Naive thymus-derived CD8-positive, alpha-beta T cell (primary cell): ENCODE measurements at regions of chr22 and their contacts with region 1.

Region 1: DNA sequence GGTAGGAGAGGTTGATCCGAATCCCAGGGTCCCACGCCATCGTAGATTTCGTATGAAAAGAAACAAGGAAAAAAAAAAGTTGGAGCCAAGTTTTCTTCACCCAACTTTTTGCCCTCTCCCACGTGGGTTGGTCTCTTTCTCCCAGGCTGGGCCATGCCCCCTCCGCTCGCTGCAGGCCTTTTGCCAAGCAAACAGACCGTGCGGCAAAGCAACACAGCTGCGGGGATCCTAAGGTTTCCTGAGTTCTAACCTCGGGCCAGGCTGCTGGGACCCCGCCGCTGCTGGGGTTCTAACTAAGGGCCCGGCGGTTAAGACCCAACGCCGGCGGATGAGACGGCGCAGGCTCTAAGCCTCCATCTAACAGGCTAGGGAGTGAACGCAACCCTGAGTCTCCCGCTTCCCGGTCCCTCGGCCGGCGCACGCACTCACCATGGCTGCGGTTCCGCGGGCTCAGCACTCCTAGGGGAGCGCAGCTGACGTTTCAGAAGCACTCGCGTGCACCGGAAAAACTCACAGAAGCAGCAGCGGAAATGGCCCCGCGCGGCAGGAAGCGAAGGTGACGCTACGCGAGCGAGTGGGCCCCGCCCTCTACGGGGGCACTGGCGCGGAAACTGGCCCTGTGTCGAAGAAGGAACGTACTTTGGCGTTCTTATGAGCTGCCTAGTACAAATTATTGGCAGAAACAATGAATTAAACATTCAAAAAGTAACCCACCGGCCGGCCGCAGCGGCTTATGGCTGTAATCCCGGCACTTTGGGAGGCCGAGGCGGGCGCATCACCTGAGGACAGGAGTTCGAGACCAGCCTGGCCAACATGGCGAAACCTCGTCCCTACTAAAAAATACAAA is at the start of gene SNU13:
- DNase-seq: peak; percentile 85 to 95 (median 91)
- ATAC-seq: peak; percentile 96
- H3K4me3 Mint-ChIP-seq: peak within 1 kb of the TSS; percentile 92 to 99 (median 96)
- H3K27ac Mint-ChIP-seq: peak within 1 kb of the TSS; percentile 97 to 99 (median 99)
- H3K4me1 Mint-ChIP-seq: peaks cover 14 to 35% (median 30%) of the 10 kb centered on the region in 4 donors
- H3K27me3 Mint-ChIP-seq: no peaks in the 10 kb centered on the region
- polyA plus RNA-seq, gene SNU13: 226 to 309 (median 285) TPM

Region 2: DNA sequence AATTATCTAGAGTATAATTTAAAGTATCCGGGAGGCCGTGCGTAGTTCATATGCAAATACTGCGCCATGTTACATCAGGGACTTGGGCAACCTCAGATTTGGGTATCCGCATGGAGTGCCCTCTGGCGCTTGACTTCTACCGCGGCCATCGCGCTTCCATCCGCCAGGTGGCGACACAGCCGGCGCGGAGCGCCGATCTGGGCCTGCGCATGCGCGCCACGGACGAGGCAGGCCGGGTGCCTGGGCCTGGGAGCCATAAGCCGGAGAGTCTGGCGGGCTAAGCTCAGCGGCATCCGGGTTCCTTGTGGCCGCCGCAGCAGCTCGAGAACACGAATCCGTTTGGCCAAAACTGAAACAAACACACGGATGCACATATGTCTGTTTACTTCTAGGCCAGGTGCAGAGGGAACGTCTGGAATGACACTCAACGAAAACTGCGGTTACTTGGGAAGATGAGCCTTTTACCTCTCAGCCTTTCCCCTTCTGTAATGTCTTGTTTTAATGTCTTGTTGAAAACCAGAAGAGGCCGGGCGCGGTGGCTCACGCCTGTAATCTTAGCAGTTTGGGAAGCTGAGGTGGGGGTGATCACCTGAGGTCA is 21.8 kb before region 1 on chr22:
- POLR2A ChIA-PET with region 1: interaction called, 35 read pairs
- DNase-seq: peak; percentile 90 to 96 (median 92)
- ATAC-seq: peak; percentile 93
- H3K4me3 Mint-ChIP-seq: peak overlapping the region; percentile 76 to 90 (median 84)
- H3K27ac Mint-ChIP-seq: peak overlapping the region; percentile 93 to 98 (median 97)
- H3K4me1 Mint-ChIP-seq: peaks cover 2 to 19% (median 11%) of the 10 kb centered on the region in 4 donors
- H3K27me3 Mint-ChIP-seq: no peaks in the 10 kb centered on the region

Region 3: GRCh38 chr22:41722496-41722895 is 33.9 kb after region 1 on chr22:
- POLR2A ChIA-PET with region 1: no interaction called
- DNase-seq: no peak
- ATAC-seq: no peak
- H3K4me3 Mint-ChIP-seq: no peak overlapping the region
- H3K27ac Mint-ChIP-seq: no peak overlapping the region
- H3K4me1 Mint-ChIP-seq: peaks cover 0 to 2% (median 0%) of the 10 kb centered on the region in 4 donors
- H3K27me3 Mint-ChIP-seq: no peaks in the 10 kb centered on the region